ENCODE measurements at regions of chr15 and their contacts with region 1.

Region 1: DNA sequence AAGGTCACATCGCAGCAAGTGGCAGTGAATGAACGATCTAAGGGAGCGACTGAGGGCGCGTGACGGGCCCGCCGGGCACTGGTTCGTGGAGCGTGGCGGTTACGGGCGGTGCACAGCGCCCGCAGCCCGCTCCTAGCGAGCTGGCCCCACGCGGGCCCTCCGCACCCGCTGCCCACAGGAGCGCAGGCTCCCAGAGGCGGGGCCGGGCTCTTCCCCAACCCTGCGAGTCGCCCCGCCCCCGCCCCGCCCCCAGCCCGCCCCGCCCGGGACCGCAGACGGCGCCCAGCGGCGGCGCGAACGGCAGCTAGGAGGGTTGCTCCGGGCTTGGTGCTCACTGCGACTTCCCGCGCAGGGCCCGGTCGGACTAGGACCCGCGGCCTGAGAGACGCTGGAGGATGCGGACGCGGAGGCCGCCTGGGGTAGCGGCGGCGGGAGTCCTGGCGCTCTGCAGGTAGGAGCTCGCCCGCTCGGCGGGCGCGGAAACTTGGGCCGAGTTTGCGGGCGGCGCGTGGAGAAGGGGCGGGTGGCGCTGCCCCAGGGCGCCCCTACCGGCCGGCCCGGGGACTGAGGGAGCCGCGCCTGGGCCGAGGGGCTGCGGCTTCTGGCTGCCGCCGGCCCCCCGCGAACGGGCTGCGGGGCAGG is at the start of gene C15orf39:
- H3K4me3 ChIP-seq: peak within 1 kb of the TSS; percentile 85
- H3K27ac ChIP-seq: peak within 1 kb of the TSS; percentile 93
- H3K4me1 ChIP-seq: peaks cover 21% of the 10 kb centered on the region
- CTCF ChIP-seq: peak; percentile 79

Region 2: GRCh38 chr15:75023181-75023871 is 178.4 kb before region 1 on chr15 and contains the start of gene PPCDC:
- CTCF ChIA-PET with region 1: interaction called, 114 read pairs
- POLR2A ChIA-PET with region 1: interaction called, 24 read pairs
- H3K4me3 ChIP-seq: peak within 1 kb of the TSS; percentile 66
- H3K27ac ChIP-seq: peak within 1 kb of the TSS; percentile 93
- H3K4me1 ChIP-seq: 0 out of 2 replicates have a peak, but pooled peaks cover 2% of the 10 kb centered on the region
- CTCF ChIP-seq: peak; percentile 32; the same call in 1 of the 2 replicates

Region 3: DNA sequence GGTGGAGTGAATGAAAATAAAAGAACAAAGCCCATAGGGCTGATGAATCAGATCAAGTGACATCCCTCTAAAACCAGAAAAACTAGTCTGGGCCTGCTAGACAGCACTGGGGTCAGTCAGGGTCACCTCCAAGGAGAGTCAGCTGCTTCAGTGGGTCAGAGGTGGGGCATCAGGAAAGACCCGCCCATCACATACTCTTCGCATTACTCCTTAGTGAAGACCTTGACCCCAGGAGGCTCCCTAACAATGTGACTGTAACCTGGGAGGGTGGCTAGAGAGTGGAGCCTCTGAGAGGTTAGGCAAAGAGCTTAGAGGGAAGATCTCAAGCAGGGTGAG is 165.4 kb before region 1 on chr15:
- CTCF ChIA-PET with region 1: interaction called, 114 read pairs
- POLR2A ChIA-PET with region 1: interaction called, 20 read pairs
- H3K4me3 ChIP-seq: no peak overlapping the region
- H3K27ac ChIP-seq: no peak overlapping the region
- H3K4me1 ChIP-seq: peaks cover 8% of the 10 kb centered on the region; the same call in 1 of the 2 replicates
- CTCF ChIP-seq: no peak

Region 4: GRCh38 chr15:75058127-75058905 is 143.4 kb before region 1 on chr15:
- CTCF ChIA-PET with region 1: interaction called, 7 read pairs
- POLR2A ChIA-PET with region 1: interaction called, 14 read pairs
- H3K4me3 ChIP-seq: no peak overlapping the region
- H3K27ac ChIP-seq: no peak overlapping the region
- H3K4me1 ChIP-seq: peaks cover 5% of the 10 kb centered on the region; the same call in 1 of the 2 replicates
- CTCF ChIP-seq: no peak

Region 5: GRCh38 chr15:75149867-75150709 is 51.6 kb before region 1 on chr15:
- CTCF ChIA-PET with region 1: no interaction called
- POLR2A ChIA-PET with region 1: interaction called, 15 read pairs
- H3K4me3 ChIP-seq: no peak overlapping the region
- H3K27ac ChIP-seq: no peak overlapping the region
- H3K4me1 ChIP-seq: 0 out of 2 replicates have a peak, but pooled peaks cover 4% of the 10 kb centered on the region
- CTCF ChIP-seq: no peak

Measured in HEK293 (cell line).